SK-N-SH (cell line): ENCODE measurements at regions of chr3 and their contacts with region 1.

Region 1: DNA sequence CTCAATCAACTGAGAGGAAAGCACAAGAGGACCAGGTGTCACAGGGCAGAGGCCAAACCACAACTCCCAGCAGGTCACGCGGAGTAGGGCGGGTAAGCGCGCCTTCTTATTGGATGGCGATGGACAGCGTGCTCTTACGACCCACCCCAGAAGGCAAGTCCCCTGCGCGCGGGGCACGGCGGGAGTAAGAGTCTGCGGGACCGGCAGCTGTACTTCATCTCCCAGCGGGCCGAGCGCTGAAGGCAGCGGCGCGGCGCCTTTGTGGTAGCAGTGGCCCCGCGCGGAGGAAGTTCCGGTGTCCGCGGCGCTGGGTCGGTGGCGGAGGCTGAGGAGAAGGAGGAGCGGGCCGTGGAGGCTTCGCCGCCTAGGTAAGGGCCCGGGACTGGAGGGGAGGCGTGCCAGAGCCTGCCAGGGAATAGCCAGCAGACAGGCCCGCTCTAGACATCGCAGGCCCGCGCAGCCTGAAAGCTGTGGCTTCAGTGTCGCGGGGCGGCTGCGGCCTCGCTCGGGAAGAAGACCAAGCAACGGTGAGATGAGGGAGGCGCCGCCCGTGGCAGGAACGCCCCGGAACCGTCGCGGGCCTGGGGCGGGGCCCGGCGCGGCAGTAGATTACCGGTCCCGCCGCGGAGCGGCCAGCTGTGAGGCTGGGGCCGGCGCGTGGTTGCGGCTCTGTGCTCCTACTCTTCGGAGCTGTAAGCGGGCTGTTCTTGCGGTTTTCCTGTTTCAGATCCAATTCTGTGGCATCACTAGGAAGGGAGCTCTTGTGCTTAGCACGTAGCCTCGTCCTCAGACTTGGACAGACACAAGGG is at the start of gene RBM6:
- DNase-seq: peak; percentile 97
- H3K4me3 ChIP-seq: peak within 1 kb of the TSS; percentile 71 to 100
- H3K27ac ChIP-seq: peak within 1 kb of the TSS; percentile 94 to 96
- H3K4me1 ChIP-seq: no peaks in the 10 kb centered on the region; a peak in 1 of 4 replicates
- H3K27me3 ChIP-seq: no peaks in the 10 kb centered on the region
- CTCF ChIP-seq: no peak
- EP300 ChIP-seq: no peak
- RAD21 ChIP-seq: no peak
- polyA plus RNA-seq, gene RBM6: 67.4 and 85.5 TPM in 2 replicates

Region 2: DNA sequence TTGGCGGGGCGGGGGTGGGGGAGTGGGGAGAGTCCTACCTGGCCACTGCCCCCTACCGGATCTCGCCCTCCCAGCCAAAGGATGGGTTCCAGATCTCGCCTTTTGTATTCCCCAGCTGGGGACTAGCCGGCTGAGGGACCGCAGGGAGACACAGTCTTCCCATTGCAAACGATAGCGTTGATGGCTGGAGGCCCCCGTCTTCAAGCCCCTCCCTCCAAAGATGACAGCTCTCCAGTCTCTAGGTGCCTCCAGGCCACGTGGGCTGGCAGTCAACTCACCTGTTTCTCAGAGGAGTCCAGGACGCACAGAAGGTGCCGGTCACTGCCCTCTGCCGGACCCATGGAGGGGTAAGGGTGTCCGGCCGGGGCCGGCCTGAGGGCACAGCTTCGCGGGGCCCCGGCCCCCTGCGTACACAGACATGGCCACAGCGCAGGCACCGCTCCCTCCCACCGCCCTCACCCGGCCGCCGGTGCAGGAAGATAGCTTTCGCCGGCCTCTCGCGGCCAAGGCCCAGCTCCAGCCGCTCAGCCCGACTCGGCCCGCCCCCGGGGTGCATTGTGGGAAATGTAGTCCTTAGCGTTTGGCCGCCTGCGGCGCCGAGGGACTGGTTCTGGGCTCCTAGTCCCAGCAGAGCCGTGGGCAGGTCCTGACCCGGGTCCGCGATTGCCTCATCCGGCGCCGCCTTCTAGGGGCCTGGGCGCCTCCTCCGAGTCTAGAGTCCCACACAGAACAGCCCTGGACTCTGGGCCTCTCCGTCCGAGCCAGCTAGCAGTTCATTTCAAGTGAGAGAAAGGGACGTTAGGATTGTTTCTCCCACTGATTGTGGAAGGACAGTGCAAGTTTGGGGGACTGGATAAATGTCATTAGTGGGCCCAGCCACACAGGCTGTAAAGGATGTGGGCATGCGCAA is 10.5 kb before region 1 on chr3 and contains the start of gene MON1A:
- CTCF ChIA-PET with region 1: interaction called, 12 read pairs
- POLR2A ChIA-PET with region 1: interaction called, 32 read pairs
- DNase-seq: peak; percentile 93
- H3K4me3 ChIP-seq: peak within 1 kb of the TSS; percentile 63 to 80
- H3K27ac ChIP-seq: peak within 1 kb of the TSS; percentile 59 to 76; a peak in 3 of 4 replicates
- H3K4me1 ChIP-seq: peaks cover 0 to 10% of the 10 kb centered on the region in 2 experiments; a peak in 1 of 4 replicates
- H3K27me3 ChIP-seq: no peaks in the 10 kb centered on the region
- CTCF ChIP-seq: peak; percentile 53
- EP300 ChIP-seq: no peak
- RAD21 ChIP-seq: no peak
- polyA plus RNA-seq, gene MON1A: 10.9 and 12.0 TPM in 2 replicates

Region 3: GRCh38 chr3:50298836-50299637 is 359.0 kb after region 1 on chr3 and contains the starts of genes HYAL3 and NAA80:
- CTCF ChIA-PET with region 1: no interaction called
- POLR2A ChIA-PET with region 1: no interaction called
- DNase-seq: peak; percentile 99
- H3K4me3 ChIP-seq: peak within 1 kb of the TSS; percentile 84 to 87
- H3K27ac ChIP-seq: peak within 1 kb of the TSS; percentile 62 to 84; a peak in 3 of 4 replicates
- H3K4me1 ChIP-seq: peaks cover 10 to 38% of the 10 kb centered on the region in 2 experiments; a peak in 2 of 4 replicates
- H3K27me3 ChIP-seq: no peaks in the 10 kb centered on the region
- CTCF ChIP-seq: peak; percentile 31
- EP300 ChIP-seq: no peak
- RAD21 ChIP-seq: no peak
- polyA plus RNA-seq, gene HYAL3: 7.8 and 8.4 TPM in 2 replicates
- polyA plus RNA-seq, gene NAA80: 10.4 and 10.5 TPM in 2 replicates